ENCODE measurements at regions of chr9 and their contacts with region 1.

Region 1: GRCh38 chr9:17462869-17463464 is 115.9 kb upstream of the SH3GL2 start:
- DNase-seq: peak; percentile 69
- H3K4me3 Mint-ChIP-seq: no peak overlapping the region
- H3K27ac Mint-ChIP-seq: no peak overlapping the region
- H3K4me1 Mint-ChIP-seq: no peaks in the 10 kb centered on the region
- H3K27me3 Mint-ChIP-seq: no peaks in the 10 kb centered on the region

Region 2: DNA sequence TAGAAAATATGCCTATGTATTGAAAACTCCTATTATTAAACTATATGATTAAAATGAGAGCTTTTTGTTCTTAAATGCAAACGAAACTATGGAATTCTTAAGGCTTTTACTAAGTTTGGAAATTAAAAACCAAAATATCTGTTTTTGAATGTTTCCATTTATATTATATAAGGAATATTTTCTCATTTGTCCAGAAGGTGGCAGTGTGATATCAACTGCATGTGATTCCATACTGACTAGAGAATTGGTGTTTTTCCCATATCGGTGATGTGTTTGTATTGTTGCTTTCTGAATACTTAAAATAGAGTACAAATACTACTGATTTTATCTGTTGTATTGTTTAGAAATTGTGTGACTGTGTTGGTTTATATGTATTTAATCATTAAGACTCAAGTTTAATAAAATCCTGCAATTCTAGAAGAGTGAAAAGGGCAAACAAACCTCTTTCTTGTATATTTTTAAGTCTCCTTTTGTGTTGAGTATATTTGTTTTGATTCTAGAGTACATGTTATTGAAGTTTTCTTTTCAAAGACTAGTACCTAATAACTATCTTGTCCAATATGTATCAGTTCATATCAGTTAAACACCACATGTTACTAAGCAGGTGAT is 1589.3 kb before region 1 on chr9:
- intact Hi-C with region 1: loop called (anchors 2 kb)
- DNase-seq: no peak
- H3K4me3 Mint-ChIP-seq: no peak overlapping the region
- H3K27ac Mint-ChIP-seq: no peak overlapping the region
- H3K4me1 Mint-ChIP-seq: no peaks in the 10 kb centered on the region
- H3K27me3 Mint-ChIP-seq: no peaks in the 10 kb centered on the region

Region 3: DNA sequence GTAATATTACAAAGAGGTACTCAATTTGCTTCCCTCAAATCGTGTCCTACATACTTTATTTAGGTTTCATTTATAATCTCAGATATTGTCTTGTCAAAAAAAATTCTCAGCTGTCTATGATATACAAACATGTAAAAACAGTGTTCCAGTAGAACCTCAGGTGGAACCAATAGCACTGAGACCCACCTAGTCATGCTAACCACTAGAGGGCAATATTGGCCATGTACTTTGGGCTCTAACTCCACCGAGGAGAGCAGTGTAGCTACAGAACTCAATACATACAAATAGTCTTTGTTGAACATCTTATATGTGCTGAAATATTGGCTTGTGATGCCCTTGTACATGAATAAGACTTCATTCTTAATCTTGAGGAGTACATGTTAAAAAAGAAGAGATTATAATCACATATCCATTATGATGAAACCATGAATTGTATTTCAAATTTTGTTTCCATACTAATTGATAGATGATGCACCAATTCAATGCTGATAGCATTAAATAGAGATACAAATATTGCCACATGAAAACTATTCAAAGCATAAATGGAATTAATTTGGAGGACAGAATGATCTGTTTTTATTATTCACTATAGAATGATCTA is 399.3 kb before region 1 on chr9:
- intact Hi-C with region 1: loop called (anchors 1 kb)
- DNase-seq: peak; percentile 60
- H3K4me3 Mint-ChIP-seq: no peak overlapping the region
- H3K27ac Mint-ChIP-seq: no peak overlapping the region
- H3K4me1 Mint-ChIP-seq: no peaks in the 10 kb centered on the region
- H3K27me3 Mint-ChIP-seq: no peaks in the 10 kb centered on the region

Region 4: DNA sequence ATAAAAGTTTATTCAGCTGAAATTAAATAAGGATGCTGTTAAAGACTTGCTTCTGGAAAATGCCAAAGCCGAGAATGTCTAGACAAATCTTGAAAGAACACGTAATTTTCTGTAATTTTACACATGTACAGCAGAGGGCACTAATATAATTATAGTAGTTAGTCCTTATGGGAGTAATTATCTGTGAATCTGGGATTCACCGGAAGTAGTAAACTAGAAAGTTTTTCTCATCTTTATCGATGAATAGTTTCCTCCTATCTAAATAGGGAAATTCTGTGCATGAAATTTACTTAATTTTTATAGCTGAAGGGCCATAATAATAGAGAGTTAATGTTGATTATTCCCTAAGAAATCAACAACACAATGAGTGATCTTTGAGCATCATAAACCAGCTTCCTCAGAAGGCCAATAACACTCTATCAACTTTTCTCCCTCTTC is 346.5 kb before region 1 on chr9:
- intact Hi-C with region 1: loop called (anchors 2 kb)
- DNase-seq: no peak
- H3K4me3 Mint-ChIP-seq: no peak overlapping the region
- H3K27ac Mint-ChIP-seq: no peak overlapping the region
- H3K4me1 Mint-ChIP-seq: no peaks in the 10 kb centered on the region
- H3K27me3 Mint-ChIP-seq: no peaks in the 10 kb centered on the region

Region 5: DNA sequence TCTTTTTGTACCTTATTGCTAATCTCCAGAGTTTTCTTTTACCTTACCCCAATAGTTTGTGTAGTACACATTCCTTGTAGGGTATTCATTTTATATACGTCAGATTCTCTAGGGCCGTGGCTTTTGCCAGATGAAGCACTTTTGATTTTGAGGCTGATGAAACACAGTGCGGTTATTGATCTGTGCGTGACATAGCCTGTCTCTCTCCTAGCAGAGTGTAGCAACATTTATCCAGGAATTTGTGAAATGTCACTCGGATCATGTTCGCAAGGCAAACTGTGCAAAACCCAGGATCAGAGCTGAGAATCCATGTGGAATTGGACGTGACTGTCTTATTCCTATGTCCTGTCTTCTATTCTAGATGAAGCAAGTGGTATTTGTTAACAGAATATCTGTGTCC is 26.1 kb before region 1 on chr9:
- intact Hi-C with region 1: no loop called
- DNase-seq: no peak
- H3K4me3 Mint-ChIP-seq: no peak overlapping the region
- H3K27ac Mint-ChIP-seq: no peak overlapping the region
- H3K4me1 Mint-ChIP-seq: no peaks in the 10 kb centered on the region
- H3K27me3 Mint-ChIP-seq: no peaks in the 10 kb centered on the region